Right cardiac atrium (tissue), 5 donors: ENCODE measurements at regions of chr16 and their contacts with region 1.

Region 1: GRCh38 chr16:56513972-56514371 is 5.9 kb downstream of the BBS2 start:
- DNase-seq: peak in 1 of 3 donors; percentile 45
- ATAC-seq: peak; percentile 58 to 70
- H3K4me3 ChIP-seq: no peak overlapping the region
- H3K27ac ChIP-seq: no peak overlapping the region
- H3K4me1 ChIP-seq: peaks cover 7% of the 10 kb centered on the region
- H3K27me3 ChIP-seq: no peaks in the 10 kb centered on the region

Region 2: DNA sequence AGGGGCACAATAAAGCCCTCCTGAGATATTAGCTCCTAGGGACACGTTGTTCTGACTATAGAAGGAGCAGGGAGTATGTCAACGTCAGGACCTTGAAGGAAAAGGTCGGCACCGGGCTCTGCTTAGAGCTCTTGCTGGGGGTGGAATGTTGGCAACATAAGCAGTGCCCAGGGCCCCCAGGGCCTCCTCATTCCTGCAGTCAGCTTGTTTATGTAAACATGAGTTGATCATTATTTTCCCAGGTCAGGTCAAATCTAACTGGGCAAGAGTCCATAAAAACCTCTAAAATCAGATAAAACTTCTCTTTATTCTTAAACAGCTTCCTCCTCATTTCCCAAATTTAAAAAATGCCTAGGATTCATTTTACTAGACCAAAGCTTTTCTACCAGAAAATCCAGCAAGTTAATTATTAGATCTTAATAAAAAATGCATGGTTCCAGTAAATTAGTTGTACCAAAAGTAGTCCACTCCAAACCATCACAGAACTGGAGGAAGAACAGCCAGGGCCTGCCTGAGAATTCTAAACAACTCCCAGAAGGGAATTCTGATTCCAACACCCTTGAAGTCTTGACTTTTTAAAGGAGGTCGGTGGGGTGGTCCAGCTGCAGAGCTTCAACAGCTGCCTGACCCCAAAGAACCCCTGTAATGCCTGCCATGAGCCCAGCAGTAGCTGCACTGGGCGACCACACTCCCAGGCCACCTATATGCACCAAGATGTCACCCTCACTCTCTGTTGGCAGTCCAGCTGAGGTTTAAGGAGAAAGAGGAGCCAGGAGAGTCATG is 142.9 kb before region 1 on chr16:
- intact Hi-C with region 1: no loop called
- DNase-seq: no peak
- ATAC-seq: peak in 1 of 2 donors; percentile 58
- H3K4me3 ChIP-seq: no peak overlapping the region
- H3K27ac ChIP-seq: no peak overlapping the region
- H3K4me1 ChIP-seq: peaks cover 8% of the 10 kb centered on the region
- H3K27me3 ChIP-seq: no peaks in the 10 kb centered on the region

Region 3: GRCh38 chr16:56481468-56482112 is 32.4 kb before region 1 on chr16:
- intact Hi-C with region 1: no loop called
- DNase-seq: no peak
- ATAC-seq: peak; percentile 45 to 47
- H3K4me3 ChIP-seq: no peak overlapping the region
- H3K27ac ChIP-seq: no peak overlapping the region
- H3K4me1 ChIP-seq: no peaks in the 10 kb centered on the region
- H3K27me3 ChIP-seq: no peaks in the 10 kb centered on the region

Region 4: DNA sequence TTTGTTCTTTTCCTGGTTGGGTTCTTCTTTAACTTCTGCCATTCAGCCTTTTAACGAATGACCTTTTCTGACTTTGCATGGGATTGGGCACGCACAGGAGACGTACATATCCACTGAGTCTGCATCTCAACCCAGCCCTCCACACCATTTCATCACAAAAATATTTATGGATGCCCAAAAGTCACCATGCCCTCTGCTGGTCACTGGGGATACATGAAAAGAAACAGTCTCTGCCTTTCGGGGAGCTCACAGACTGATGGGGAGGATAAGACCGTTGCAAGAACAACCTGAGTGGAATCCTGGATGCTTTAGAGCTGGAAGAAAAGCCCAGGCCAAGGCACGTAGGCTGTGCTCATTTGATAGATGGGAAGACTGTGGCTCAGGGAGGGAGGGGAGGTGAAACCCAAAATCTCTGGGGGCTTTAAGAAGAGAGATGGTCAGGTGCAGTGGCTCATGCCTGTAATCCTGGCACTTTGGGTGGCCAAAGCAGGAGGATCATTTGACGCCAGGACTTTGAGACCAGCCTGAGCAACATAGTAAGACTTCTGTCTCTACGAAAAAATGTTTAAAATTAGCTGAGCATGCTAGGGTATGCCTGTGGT is 86.5 kb after region 1 on chr16:
- intact Hi-C with region 1: loop called in 2 of 4 experiments (anchors 2 kb)
- DNase-seq: no peak
- ATAC-seq: peak; percentile 37 to 51
- H3K4me3 ChIP-seq: no peak overlapping the region
- H3K27ac ChIP-seq: no peak overlapping the region
- H3K4me1 ChIP-seq: no peaks in the 10 kb centered on the region
- H3K27me3 ChIP-seq: no peaks in the 10 kb centered on the region